ENCODE measurements at regions of chr2 and their contacts with region 1.

Region 1: GRCh38 chr2:30026087-30027055 is 105.0 kb upstream of the ALK start:
- DNase-seq: peak; percentile 14
- H3K4me3 Mint-ChIP-seq: no peak overlapping the region
- H3K27ac Mint-ChIP-seq: no peak overlapping the region
- H3K4me1 Mint-ChIP-seq: no peaks in the 10 kb centered on the region
- H3K27me3 Mint-ChIP-seq: peaks cover 5% of the 10 kb centered on the region

Region 2: DNA sequence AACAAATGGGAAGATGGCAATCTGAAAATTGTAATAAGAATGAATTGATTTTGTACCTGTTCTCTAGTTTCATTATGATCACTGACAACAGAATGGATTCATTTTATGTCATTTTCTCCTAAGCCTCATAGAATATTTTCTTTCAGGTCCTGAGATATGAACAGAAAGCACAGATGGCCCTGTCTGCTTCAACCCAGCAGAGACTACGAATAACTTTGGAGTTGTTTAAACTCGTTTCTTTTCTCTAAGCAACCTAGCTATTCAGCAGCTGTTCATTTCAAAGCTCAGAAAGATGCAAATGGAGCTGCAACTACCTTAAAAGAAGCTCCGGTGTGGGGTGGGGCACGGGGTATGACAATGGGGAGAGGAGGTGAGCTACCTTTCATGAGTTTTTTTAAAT is 229.9 kb before region 1 on chr2:
- CTCF ChIA-PET with region 1: no interaction called
- intact Hi-C with region 1: no loop called
- DNase-seq: no peak
- H3K4me3 Mint-ChIP-seq: no peak overlapping the region
- H3K27ac Mint-ChIP-seq: no peak overlapping the region
- H3K4me1 Mint-ChIP-seq: no peaks in the 10 kb centered on the region
- H3K27me3 Mint-ChIP-seq: peaks cover 3% of the 10 kb centered on the region

Region 3: DNA sequence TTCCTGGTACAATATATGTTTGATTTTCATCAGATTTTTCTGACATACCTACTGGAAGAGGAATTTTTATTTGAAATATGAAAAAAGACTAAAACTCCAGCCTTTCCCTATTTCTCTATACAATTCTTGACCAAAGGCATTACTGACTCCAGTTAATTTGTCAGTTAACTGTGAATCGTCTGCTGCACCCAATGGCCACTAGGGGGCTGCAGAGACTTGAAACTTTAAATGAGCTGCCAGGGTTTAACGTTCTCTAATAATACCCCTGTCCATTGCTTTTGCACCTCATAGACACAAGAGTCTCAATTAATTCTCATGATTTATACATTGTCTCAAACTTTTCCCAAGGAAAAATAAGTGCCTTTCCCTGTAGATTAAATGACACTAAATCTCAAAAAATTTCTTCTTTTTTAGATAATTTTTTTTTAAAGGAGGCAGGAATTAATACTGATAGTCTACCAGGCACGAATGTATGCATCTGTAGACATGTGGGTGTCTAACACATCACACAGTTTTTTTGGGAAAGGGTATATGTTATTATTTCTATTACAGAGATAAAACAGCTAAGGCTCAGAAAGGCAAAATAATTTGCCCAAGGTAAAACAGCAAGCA is 103.2 kb before region 1 on chr2:
- CTCF ChIA-PET with region 1: interaction called, 6 read pairs
- intact Hi-C with region 1: loop called (anchors 1 kb)
- DNase-seq: peak; percentile 72
- H3K4me3 Mint-ChIP-seq: no peak overlapping the region
- H3K27ac Mint-ChIP-seq: no peak overlapping the region
- H3K4me1 Mint-ChIP-seq: peaks cover 13% of the 10 kb centered on the region
- H3K27me3 Mint-ChIP-seq: peaks cover 52% of the 10 kb centered on the region

Region 4: GRCh38 chr2:30060562-30060961 is 34.2 kb after region 1 on chr2:
- CTCF ChIA-PET with region 1: no interaction called
- intact Hi-C with region 1: no loop called
- DNase-seq: no peak
- H3K4me3 Mint-ChIP-seq: no peak overlapping the region
- H3K27ac Mint-ChIP-seq: no peak overlapping the region
- H3K4me1 Mint-ChIP-seq: no peaks in the 10 kb centered on the region
- H3K27me3 Mint-ChIP-seq: peaks cover 18% of the 10 kb centered on the region

Measured in activated naive CD4-positive, alpha-beta T cell treated with anti-CD3 and anti-CD28 coated beads for 36 hours (primary cell).